RWPE1 (cell line): ENCODE measurements at regions of chr10 and their contacts with region 1.

Region 1: DNA sequence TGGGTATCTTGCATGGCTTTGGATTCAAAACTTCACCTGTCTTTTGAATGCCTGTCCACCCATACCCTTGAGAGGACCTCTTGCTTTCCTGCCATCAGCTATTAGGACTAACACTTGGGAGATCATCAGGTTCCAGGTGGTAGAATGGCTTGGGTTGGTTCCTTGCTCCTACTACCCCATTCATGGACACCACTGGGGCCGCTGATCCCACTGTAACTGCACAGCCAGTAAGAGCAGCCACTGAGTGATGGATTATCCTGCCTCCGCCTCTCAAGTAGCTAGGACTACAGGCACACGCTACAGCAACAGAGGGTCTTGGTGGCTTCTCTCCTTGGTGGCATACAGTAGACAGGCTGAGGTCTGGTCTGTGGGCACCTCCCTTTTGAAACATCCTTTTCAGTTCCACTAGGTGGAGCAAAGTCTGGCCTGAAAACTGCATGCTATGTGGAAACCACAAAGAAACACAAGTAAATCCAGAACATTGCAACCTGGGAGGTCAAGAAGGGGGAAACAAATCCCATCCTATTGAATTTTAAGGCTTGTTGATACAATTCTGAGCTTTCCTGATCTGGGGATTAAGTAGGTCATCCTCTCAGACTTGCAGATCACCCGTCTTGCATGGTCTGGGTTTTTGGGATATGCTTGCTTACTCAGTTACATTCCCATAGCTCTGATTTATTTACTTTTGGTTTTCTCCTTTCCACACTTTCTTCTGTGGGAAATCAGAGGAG is 9.4 kb downstream of the WBP1L start:
- DNase-seq: no peak
- H3K27ac ChIP-seq: peak overlapping the region; percentile 68
- CTCF ChIP-seq: peak; percentile 69

Region 2: GRCh38 chr10:102691285-102692066 is 61.6 kb before region 1 on chr10:
- CTCF ChIA-PET with region 1: no interaction called
- POLR2A ChIA-PET with region 1: no interaction called
- DNase-seq: no peak
- H3K27ac ChIP-seq: no peak overlapping the region
- CTCF ChIP-seq: no peak

Region 3: GRCh38 chr10:102720775-102721301 is 32.3 kb before region 1 on chr10:
- CTCF ChIA-PET with region 1: interaction called, 13 read pairs
- POLR2A ChIA-PET with region 1: no interaction called
- DNase-seq: no peak
- H3K27ac ChIP-seq: no peak overlapping the region
- CTCF ChIP-seq: no peak

Region 4: DNA sequence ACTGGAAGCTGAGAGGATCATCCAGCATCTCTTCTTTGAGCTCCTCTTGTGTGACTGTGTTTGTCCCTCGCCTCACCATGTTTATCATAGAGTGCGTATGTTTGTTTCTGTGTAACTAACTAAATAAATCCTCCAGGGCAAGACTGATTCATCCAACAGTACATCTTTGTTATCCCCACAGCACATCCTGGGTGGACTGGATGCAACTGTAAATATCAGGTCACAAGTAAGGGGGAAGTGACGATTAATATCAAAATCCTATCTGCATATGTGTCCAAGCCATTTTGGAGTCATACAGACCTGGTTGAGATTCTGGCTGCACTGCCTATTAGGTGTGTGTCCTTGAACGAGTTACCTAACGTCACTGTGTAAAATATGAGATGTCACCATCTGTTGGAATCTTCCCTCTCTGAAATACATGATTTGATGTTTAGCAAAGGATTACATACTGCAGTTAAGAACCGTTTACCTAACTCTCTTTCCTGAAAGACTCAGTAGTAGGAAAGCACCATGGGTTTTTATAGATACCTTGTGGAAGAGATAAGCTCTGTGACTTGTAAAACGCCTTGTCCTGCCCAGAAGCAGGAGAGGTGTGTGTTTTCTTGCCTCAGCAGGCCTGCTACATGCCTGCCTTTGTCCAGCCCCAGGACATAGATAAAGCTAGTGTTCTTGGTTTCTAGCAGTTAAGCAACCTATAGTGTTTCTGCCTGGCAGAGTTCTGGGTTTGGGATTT is 16.4 kb after region 1 on chr10:
- CTCF ChIA-PET with region 1: interaction called, 15 read pairs
- POLR2A ChIA-PET with region 1: no interaction called
- DNase-seq: peak; percentile 72
- H3K27ac ChIP-seq: peak overlapping the region; percentile 92
- CTCF ChIP-seq: no peak